Activated CD8-positive, alpha-beta T cell treated with anti-CD3 and anti-CD28 coated beads, Interleukin-2, amount 10 ng/mL, durations not matched to agents 7 days and 5 days (primary cell): ENCODE measurements at regions of chr3 and their contacts with region 1.

Region 1: GRCh38 chr3:132343018-132343612 is 25.9 kb downstream of the ACP3 start:
- DNase-seq: peak; percentile 45
- ATAC-seq: peak; percentile 69
- H3K4me3 Mint-ChIP-seq: no peak overlapping the region
- H3K27ac Mint-ChIP-seq: no peak overlapping the region
- H3K4me1 Mint-ChIP-seq: no peaks in the 10 kb centered on the region
- H3K27me3 Mint-ChIP-seq: peaks cover 26% of the 10 kb centered on the region

Region 2: GRCh38 chr3:132180337-132180791 is 162.8 kb before region 1 on chr3:
- CTCF ChIA-PET with region 1: no interaction called
- POLR2A ChIA-PET with region 1: no interaction called
- DNase-seq: no peak
- ATAC-seq: peak; percentile 47
- H3K4me3 Mint-ChIP-seq: no peak overlapping the region
- H3K27ac Mint-ChIP-seq: no peak overlapping the region
- H3K4me1 Mint-ChIP-seq: no peaks in the 10 kb centered on the region
- H3K27me3 Mint-ChIP-seq: peaks cover 2% of the 10 kb centered on the region

Region 3: DNA sequence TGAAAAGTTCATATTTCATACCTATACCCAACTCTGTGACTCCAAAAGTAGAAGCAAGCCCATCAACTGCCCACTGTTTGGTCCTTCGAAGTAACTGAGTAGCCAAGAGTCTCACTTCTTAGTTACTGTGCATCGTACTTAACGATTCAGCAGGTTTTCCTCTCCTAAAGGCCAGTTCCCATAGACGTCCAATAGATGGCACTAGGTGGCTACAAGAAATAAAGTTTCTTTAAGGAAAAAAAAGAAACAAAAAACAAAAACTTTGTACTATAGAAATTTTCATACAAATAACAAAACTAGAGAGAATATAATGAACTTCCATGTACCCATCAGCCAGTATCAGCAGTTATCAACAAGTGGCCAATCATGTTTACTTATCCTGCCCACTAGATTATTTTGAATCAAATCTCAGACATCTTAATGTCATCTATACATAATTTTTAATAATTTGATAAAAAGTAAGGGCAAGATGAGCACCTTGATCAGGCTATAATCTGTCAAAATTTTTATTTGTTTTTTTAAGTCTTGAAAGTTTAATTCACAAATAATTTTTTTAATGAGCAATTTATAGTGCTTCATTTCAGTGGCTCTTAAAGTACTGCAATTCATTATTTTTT is 89.7 kb before region 1 on chr3:
- CTCF ChIA-PET with region 1: interaction called, 27 read pairs
- POLR2A ChIA-PET with region 1: no interaction called
- DNase-seq: peak; percentile 26
- ATAC-seq: no peak
- H3K4me3 Mint-ChIP-seq: no peak overlapping the region
- H3K27ac Mint-ChIP-seq: no peak overlapping the region
- H3K4me1 Mint-ChIP-seq: no peaks in the 10 kb centered on the region
- H3K27me3 Mint-ChIP-seq: peaks cover 8% of the 10 kb centered on the region